ENCODE measurements at regions of chr10 and their contacts with region 1.

Region 1: GRCh38 chr10:79347226-79347893 is at the start of gene PPIF:
- DNase-seq: peak; percentile 95
- H3K4me3 Mint-ChIP-seq: peak within 1 kb of the TSS; percentile 80
- H3K27ac Mint-ChIP-seq: peak within 1 kb of the TSS; percentile 90
- H3K4me1 Mint-ChIP-seq: peaks cover 51% of the 10 kb centered on the region
- H3K27me3 Mint-ChIP-seq: no peaks in the 10 kb centered on the region

Region 2: DNA sequence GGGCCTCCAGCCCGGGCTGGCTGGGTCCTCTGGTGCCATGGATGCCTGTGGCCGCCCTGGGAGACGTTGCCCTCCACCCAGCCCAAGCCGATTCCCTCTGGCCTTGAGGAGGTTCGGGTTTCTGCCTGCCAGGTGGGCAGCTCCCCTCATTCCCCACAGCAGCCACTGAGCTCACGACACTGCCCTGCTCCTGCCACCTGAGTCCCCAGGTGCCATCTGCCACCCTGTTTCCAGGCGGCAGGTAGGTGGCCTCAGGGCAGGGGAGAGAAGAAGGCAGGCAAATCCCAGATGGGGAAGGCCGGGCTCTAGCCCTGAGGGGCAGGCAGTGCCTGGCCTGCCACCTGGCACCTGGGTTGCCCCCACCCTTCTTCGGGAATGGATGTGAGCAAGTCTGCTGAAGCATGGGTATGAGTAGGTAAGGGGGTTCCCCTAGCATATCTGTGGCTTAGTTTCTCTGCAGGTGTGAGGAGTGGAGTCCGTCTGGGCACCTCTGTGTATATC is 92.3 kb before region 1 on chr10:
- CTCF ChIA-PET with region 1: no interaction called
- DNase-seq: no peak
- H3K4me3 Mint-ChIP-seq: no peak overlapping the region
- H3K27ac Mint-ChIP-seq: no peak overlapping the region
- H3K4me1 Mint-ChIP-seq: peaks cover 15% of the 10 kb centered on the region
- H3K27me3 Mint-ChIP-seq: no peaks in the 10 kb centered on the region

Region 3: DNA sequence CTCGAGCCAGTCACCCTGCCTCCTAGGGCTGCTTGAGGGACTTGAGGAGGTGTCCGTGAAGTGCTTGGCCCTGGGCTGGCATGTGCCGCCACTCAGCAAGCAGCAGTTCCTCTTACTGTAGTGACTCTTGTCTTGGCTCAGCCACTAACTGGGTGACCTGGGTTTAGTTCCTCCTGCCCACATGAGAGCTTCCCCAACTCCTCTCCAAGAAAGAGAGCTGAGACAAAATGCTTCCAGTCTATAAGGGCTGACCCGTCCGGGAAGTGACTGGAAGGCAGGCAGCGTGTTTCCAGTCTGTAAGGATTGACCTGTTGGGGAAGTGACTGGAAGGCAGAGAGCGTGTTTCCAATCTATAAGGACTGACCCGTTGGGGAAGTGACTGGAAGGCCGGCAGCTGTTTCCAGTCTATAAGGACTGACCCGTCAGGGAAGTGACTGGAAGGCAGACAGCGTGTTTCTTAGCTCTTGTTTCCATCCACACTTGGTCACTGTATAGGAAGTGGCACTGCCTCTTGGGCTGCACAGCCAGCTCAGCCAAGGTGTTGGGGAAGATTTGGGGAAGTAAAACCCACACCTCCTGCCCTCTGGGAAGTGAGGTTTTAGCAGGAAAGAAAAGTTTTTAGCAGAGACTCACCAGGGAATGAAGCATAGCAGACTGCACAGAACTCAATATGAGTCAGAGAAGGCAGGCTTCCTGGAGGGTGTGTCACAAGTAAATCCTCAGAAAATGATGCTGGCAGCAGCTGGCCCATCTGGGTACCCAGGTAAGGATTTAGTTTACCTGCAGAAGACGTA is 53.3 kb before region 1 on chr10:
- CTCF ChIA-PET with region 1: interaction called, 12 read pairs
- DNase-seq: no peak
- H3K4me3 Mint-ChIP-seq: no peak overlapping the region
- H3K27ac Mint-ChIP-seq: peak overlapping the region; percentile 49
- H3K4me1 Mint-ChIP-seq: peaks cover 26% of the 10 kb centered on the region
- H3K27me3 Mint-ChIP-seq: no peaks in the 10 kb centered on the region

Region 4: DNA sequence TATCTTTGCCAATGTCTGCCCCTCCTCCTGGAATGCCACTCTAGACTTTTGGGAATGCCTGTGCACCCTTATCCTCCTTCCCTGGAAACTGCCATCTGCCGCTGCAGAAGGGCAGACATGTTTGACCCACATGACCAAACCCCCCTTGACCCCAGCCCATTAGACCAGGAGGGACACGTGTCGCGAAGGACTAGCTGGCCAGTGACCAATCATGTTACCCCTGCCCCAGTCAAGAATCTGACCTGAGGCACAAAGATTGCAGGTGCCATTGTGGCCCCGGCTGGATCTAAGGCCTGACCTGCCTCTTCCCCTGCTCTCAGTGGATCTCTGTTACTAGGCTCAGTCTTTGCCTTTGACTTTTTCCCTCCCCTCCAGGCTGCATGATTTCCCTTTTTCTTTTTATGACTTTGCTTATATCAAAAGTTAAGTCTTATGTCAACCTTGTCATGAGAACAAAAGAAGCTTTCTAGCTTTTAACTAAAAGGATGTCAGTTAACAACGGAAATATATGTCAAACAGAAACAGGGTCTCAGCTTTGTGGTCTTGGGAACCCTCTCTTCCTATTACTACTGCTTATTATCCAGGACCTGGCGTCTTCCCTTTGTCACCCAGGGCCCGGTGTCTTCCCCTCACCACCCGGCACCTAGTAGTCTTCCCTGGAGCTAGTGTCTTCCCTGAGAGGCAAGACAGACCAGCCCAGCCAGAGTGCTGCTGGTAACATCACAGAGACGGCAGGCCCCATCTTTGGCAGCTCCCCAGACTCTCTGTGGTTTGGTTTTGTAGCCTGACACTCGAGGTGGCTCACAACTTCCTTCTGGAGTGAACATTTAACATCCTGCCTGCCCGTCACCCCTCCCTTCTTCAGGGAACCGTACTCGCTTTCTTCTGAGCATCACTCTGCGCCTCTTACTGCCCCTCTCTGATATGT is 24.5 kb before region 1 on chr10:
- CTCF ChIA-PET with region 1: interaction called, 40 read pairs
- DNase-seq: peak; percentile 86
- H3K4me3 Mint-ChIP-seq: peak overlapping the region; percentile 54
- H3K27ac Mint-ChIP-seq: peak overlapping the region; percentile 96
- H3K4me1 Mint-ChIP-seq: peaks cover 70% of the 10 kb centered on the region
- H3K27me3 Mint-ChIP-seq: peaks cover 6% of the 10 kb centered on the region

Measured in activated naive CD4-positive, alpha-beta T cell treated with anti-CD3 and anti-CD28 coated beads, Interleukin-2, amount 10 ng/mL, durations not matched to agents 7 days and 5 days (primary cell).